Calu3 (cell line): ENCODE measurements at regions of chr16 and their contacts with region 1.

Region 1: DNA sequence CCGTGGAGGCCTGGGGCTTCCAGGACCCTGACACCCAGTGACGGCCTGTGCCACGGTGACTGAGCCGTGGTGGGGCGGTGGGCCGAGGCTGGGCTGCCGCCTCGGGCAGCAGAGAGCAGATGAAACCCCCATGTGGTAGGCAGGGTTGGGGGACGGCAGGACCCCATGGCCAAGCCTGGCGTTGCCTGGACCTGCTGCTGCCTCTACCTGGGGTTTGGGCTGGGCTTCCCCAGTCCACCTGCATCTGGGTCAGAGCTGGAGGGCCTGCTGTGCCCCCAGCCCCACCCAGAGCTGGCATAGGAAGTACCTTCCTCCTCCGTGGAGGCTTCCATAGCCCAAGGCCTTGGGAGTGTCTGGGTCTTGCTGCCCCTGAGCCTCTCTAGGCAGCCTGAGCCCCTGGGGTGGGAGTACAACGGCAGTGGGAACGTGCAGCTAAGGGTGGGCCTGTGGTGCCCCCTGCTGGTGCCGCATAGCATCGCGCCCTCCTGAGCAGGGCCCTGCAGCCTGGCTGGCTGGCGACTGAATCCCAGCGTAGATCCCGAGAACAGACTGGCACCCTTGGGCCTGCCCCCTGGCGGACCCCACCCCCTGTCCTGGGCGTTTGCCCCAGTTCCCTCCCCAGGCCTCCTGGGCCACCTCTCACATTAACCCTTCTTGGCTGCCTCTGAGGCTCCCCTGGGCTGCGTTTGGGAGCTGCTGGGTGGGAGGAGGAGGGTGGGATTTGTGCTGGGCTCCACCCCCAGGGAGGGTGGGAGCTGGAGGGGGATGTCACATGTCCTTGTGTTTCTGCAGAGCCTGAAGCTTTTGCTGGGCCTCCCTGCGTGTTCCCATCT is 12.6 kb upstream of the ATP6V0C start:
- DNase-seq: peak; percentile 92
- H3K4me3 Mint-ChIP-seq: no peak overlapping the region
- H3K27ac Mint-ChIP-seq: no peak overlapping the region
- H3K4me1 Mint-ChIP-seq: no peaks in the 10 kb centered on the region
- H3K27me3 Mint-ChIP-seq: no peaks in the 10 kb centered on the region
- CTCF ChIP-seq: peak; percentile 96

Region 2: GRCh38 chr16:2341456-2342447 is 159.4 kb before region 1 on chr16:
- CTCF ChIA-PET with region 1: no interaction called
- intact Hi-C with region 1: loop called (anchors 2 kb)
- DNase-seq: no peak
- H3K4me3 Mint-ChIP-seq: peak overlapping the region; percentile 80
- H3K27ac Mint-ChIP-seq: no peak overlapping the region
- H3K4me1 Mint-ChIP-seq: peaks cover 18% of the 10 kb centered on the region
- H3K27me3 Mint-ChIP-seq: peaks cover 18% of the 10 kb centered on the region
- CTCF ChIP-seq: no peak

Region 3: DNA sequence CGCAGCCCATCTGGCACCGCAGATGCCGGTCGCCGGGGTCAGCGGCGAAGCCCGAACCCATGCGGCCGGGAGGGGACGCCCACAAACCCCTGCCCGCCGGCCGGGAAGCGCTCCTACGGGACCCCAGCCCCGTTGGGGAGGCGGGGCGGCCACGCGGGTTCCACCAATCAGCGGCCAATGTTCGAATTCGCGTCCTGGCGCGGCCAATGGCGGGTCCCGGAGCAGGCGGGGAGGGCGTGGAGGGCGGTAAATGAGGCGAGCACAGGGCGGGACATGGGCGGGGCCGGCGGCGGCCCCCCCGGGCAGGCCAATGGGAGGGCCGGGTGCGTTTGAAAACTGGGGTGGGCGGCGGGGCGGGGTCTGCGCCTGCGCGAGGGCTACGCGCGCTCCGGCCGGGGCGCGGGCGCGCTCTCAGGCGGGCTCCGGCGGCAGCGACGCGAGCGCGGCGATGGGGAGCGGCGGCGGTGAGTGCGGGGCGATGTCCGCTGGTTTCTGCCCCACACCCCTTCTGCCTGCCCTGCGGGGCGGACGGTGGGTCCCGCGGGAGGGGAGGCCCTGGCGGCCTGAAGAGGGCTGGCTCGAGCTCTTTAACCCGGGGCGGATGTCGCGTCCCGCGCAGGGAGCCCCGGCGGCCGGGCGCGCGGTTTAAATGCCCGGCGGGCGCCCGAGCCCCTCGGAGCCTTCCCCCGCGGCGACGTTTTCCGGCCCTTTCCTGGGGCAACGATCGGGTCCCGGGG is 71.9 kb before region 1 on chr16 and contains the start of gene CCNF:
- CTCF ChIA-PET with region 1: interaction called, 12 read pairs
- intact Hi-C with region 1: loop called (anchors 10 kb)
- DNase-seq: peak; percentile 98
- H3K4me3 Mint-ChIP-seq: peak within 1 kb of the TSS; percentile 79
- H3K27ac Mint-ChIP-seq: peak within 1 kb of the TSS; percentile 78
- H3K4me1 Mint-ChIP-seq: peaks cover 33% of the 10 kb centered on the region
- H3K27me3 Mint-ChIP-seq: no peaks in the 10 kb centered on the region
- CTCF ChIP-seq: no peak
- total RNA-seq, gene CCNF: 47.9 and 54.5 TPM in 2 replicates

Region 4: GRCh38 chr16:2474877-2475412 is 26.2 kb before region 1 on chr16 and contains the start of gene TBC1D24:
- CTCF ChIA-PET with region 1: no interaction called
- intact Hi-C with region 1: no loop called
- DNase-seq: peak; percentile 95
- H3K4me3 Mint-ChIP-seq: peak within 1 kb of the TSS; percentile 79
- H3K27ac Mint-ChIP-seq: peak within 1 kb of the TSS; percentile 36
- H3K4me1 Mint-ChIP-seq: peaks cover 31% of the 10 kb centered on the region
- H3K27me3 Mint-ChIP-seq: peaks cover 30% of the 10 kb centered on the region
- CTCF ChIP-seq: no peak
- total RNA-seq, gene TBC1D24: 31.3 and 33.3 TPM in 2 replicates

Region 5: DNA sequence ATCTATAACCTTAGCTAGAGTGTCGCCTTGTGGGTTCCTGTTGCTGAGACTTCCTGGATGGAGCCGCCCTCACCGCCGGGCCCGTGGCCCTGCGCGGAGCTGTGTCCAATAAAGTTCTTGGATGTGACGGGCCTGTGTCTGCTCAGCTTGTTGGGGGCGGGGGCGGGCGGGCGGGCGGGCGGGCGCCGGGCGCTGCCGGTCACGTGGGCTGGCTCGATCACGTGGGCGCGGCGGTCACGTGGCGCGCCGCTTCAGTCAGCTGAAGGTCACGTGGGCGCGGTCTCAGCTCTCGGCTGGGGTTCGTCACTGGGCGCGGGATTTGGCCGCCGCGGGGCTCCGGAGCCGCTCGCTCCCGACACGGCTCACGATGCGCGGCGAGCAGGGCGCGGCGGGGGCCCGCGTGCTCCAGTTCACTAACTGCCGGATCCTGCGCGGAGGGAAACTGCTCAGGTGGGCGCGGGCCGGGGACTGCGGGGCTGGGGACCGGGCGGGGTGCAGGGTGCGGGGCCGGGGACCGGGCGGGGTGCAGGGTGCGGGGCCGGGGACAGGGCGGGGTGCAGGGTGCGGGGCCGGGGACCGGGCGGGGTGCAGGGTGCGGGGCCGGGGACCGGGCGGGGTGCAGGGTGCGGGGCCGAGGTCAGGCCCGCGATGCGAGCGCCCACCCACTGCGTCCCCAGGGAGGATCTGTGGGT is 19.1 kb after region 1 on chr16 and contains the start of gene AMDHD2:
- CTCF ChIA-PET with region 1: interaction called, 11 read pairs
- intact Hi-C with region 1: no loop called
- DNase-seq: peak; percentile 93
- H3K4me3 Mint-ChIP-seq: peak within 1 kb of the TSS; percentile 83
- H3K27ac Mint-ChIP-seq: peak within 1 kb of the TSS; percentile 93
- H3K4me1 Mint-ChIP-seq: peaks cover 56% of the 10 kb centered on the region
- H3K27me3 Mint-ChIP-seq: no peaks in the 10 kb centered on the region
- CTCF ChIP-seq: no peak
- total RNA-seq, gene AMDHD2: 60.2 and 65.1 TPM in 2 replicates